ENCODE measurements at regions of chrX and their contacts with region 1.

Region 1: GRCh38 chrX:94058728-94059382 is 384.8 kb downstream of the FAM133A start:
- DNase-seq: no peak
- H3K4me3 Mint-ChIP-seq: no peak overlapping the region
- H3K27ac Mint-ChIP-seq: no peak overlapping the region
- H3K4me1 Mint-ChIP-seq: no peaks in the 10 kb centered on the region
- H3K27me3 Mint-ChIP-seq: no peaks in the 10 kb centered on the region

Region 2: DNA sequence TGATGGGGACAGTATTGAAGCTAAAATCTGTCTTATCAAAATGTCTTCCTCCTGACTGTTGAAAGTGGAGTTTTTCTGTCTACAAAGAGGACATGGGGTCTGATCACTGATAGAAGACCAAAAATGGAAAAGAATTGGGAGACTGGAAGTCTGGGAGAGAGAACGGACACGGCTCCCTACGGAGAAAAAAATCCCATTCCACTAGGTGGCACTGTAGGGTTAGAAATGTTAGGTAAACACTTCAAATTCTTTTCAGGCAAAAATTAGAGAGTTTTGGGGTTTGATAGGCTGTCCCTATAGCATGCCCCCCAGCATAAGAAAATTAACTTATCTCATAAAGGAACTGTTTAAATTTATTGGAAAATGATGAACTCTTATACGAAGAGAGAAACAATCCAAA is 184.3 kb before region 1 on chrX:
- CTCF ChIA-PET with region 1: interaction called, 3 read pairs
- intact Hi-C with region 1: loop called (anchors 2 kb)
- DNase-seq: no peak
- H3K4me3 Mint-ChIP-seq: no peak overlapping the region
- H3K27ac Mint-ChIP-seq: no peak overlapping the region
- H3K4me1 Mint-ChIP-seq: no peaks in the 10 kb centered on the region
- H3K27me3 Mint-ChIP-seq: no peaks in the 10 kb centered on the region

Region 3: DNA sequence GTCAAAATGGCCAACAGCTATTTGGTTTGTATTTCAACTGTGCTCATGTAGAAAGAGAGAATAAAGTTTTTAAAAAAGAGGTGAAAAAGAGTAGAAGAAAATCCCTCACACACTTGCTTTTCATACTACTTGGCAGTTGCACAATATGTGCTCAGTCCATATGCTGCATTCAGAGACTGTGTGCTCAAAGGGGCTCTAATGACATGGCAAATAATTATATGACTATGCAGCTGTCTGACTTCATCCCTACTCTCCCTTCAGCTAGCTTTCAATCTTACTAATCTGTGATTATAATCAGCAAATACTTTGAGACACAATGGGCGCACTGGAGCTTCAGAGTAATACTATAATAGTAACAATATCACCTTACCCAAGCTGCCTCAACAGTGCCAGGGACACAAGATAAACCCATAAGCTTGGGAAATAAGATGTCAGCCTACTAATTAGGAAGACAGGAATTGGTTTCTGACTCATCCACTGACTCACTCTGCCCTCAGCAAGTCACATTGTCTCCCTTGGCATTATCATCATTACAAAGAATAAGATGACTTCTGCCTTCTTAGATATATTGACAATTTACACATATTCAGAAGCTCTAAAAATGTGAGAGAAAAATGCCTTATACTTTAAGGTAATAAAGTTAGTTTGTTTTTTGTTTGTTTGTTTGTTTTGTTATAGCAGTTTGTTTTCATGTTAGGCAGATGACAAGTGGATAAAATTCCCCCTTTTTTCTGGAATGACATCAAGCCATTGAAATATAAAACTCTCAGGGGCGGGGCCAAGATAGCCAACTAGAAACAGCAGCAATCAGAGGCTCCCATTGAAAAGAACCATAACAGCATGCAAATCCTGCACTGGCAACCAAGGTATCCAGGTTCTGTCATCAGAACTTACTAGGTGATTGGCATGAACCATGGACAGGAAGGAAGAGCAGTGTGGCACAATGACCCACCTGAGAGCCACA is 73.2 kb before region 1 on chrX:
- CTCF ChIA-PET with region 1: no interaction called
- intact Hi-C with region 1: loop called (anchors 10 kb)
- DNase-seq: no peak
- H3K4me3 Mint-ChIP-seq: no peak overlapping the region
- H3K27ac Mint-ChIP-seq: no peak overlapping the region
- H3K4me1 Mint-ChIP-seq: no peaks in the 10 kb centered on the region
- H3K27me3 Mint-ChIP-seq: no peaks in the 10 kb centered on the region